ENCODE measurements at regions of chr21 and their contacts with region 1.

Region 1: DNA sequence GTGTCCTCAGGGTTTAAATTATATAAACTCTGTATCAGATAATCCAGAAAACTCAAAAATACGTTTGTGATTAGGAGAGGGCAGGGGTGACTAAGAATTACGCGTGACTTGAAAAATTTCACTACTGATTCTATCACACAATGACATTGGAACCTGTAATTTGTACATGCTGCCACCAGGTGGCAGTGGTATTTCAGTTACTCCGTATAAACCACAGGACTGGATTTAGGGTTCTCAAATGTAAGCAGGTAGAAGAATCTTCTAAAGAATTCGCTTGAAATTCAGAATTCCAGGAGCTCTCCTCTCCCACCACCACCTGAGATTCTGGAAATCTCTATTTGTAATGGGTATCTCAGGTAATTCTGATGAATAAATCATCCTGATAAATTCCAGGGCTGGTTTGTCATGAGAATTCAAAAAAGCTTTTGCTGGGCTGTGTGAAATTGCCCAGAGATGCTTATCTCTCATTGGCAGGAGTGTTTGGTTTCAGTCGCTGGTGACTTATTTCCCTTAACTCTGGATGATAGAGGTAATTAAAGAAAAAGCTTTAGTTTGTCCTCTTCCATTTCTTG is 1.7 kb upstream of the KRTAP7-1 start:
- DNase-seq: peak; percentile 31
- CTCF ChIP-seq: peak; percentile 65

Region 2: DNA sequence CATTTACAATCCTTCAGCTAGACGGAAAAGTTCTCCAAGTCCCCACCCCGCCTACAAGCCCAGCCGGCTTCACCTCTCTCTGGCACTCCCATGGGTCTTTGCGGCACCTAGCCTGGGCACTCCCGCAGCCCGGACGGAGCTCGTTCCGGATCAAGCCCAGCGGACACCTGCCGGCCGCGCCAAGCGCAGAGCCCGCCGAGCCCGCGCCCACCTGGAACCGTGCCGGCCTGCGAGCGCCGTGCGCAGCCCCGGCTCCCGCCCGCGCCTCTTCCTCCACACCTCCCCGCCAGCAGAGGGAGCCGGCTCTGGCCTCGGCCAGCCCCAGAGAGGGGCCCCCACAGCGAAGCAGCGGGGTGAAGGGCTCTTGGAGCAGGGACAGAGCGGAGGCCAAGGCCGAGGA is 257.0 kb after region 1 on chr21:
- in situ Hi-C with region 1: loop called (anchors 10 kb)
- DNase-seq: no peak
- CTCF ChIP-seq: no peak